Naive thymus-derived CD4-positive, alpha-beta T cell (primary cell): ENCODE measurements at regions of chr6 and their contacts with region 1.

Region 1: GRCh38 chr6:106325336-106326178 is at the start of gene ATG5:
- DNase-seq: peak; percentile 99
- ATAC-seq: peak; percentile 98
- H3K4me3 ChIP-seq: peak within 1 kb of the TSS; percentile 99
- H3K4me3 Mint-ChIP-seq: peak within 1 kb of the TSS; percentile 96 to 100 (median 98)
- H3K27ac ChIP-seq: peak within 1 kb of the TSS; percentile 95
- H3K27ac Mint-ChIP-seq: peak within 1 kb of the TSS; percentile 95 to 100 (median 98)
- H3K4me1 ChIP-seq: peaks cover 16 to 24% of the 10 kb centered on the region in 2 donors
- H3K4me1 Mint-ChIP-seq: peaks cover 33 to 56% (median 46%) of the 10 kb centered on the region in 7 donors
- H3K27me3 ChIP-seq: no peaks in the 10 kb centered on the region
- H3K27me3 Mint-ChIP-seq: peaks cover 13 to 30% (median 17%) of the 10 kb centered on the region in 5 donors
- total RNA-seq, gene ATG5: 24.0 to 30.9 (median 27.0) TPM

Region 2: DNA sequence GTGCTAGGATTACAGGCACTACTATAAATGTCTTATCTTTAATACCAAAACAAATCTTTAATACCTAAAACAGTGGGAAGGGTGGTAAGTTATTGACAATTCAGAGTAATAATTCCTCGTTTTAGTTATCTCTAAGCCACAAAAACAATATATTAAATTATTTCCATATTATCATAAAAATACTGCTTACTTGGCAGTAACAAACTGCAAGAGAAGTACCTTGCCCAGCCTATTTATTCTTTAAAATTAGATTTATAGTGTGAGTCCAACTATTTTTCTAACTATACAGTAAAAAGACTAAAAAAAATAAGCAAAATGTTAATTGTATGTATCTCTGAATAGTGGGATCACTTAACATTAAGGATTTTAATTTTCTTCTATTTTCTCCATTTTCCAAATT is 1589.0 kb before region 1 on chr6:
- CTCF ChIA-PET with region 1: no interaction called
- POLR2A ChIA-PET with region 1: no interaction called
- intact Hi-C with region 1: no loop called
- DNase-seq: no peak
- ATAC-seq: no peak
- H3K4me3 ChIP-seq: no peak overlapping the region
- H3K4me3 Mint-ChIP-seq: no peak overlapping the region
- H3K27ac ChIP-seq: no peak overlapping the region
- H3K27ac Mint-ChIP-seq: no peak overlapping the region
- H3K4me1 ChIP-seq: no peaks in the 10 kb centered on the region
- H3K4me1 Mint-ChIP-seq: no peaks in the 10 kb centered on the region
- H3K27me3 ChIP-seq: no peaks in the 10 kb centered on the region
- H3K27me3 Mint-ChIP-seq: no peaks in the 10 kb centered on the region

Region 3: GRCh38 chr6:104789770-104790190 is 1535.8 kb before region 1 on chr6:
- CTCF ChIA-PET with region 1: no interaction called
- POLR2A ChIA-PET with region 1: no interaction called
- intact Hi-C with region 1: loop called in 1 of 2 experiments (anchors 5 kb)
- DNase-seq: peak in 7 of 9 donors; percentile 43 to 78 (median 63)
- ATAC-seq: peak; percentile 96
- H3K4me3 ChIP-seq: no peak overlapping the region
- H3K4me3 Mint-ChIP-seq: peak overlapping the region in 7 of 10 donors; percentile 31 to 79 (median 49)
- H3K27ac ChIP-seq: no peak overlapping the region
- H3K27ac Mint-ChIP-seq: peak overlapping the region; percentile 21 to 86 (median 65)
- H3K4me1 ChIP-seq: peaks cover 8 to 10% of the 10 kb centered on the region in 2 donors
- H3K4me1 Mint-ChIP-seq: peaks cover 10 to 32% (median 19%) of the 10 kb centered on the region in 7 donors
- H3K27me3 ChIP-seq: no peaks in the 10 kb centered on the region
- H3K27me3 Mint-ChIP-seq: no peaks in the 10 kb centered on the region

Region 4: GRCh38 chr6:105646391-105646867 is 679.1 kb before region 1 on chr6:
- CTCF ChIA-PET with region 1: no interaction called
- POLR2A ChIA-PET with region 1: no interaction called
- intact Hi-C with region 1: loop called in 1 of 2 experiments (anchors 1 kb)
- DNase-seq: peak in 1 of 9 donors; percentile 36
- ATAC-seq: peak; percentile 81
- H3K4me3 ChIP-seq: no peak overlapping the region
- H3K4me3 Mint-ChIP-seq: peak overlapping the region in 1 of 10 donors; percentile 41
- H3K27ac ChIP-seq: no peak overlapping the region
- H3K27ac Mint-ChIP-seq: peak overlapping the region in 2 of 9 donors; percentile 12 to 83
- H3K4me1 ChIP-seq: peaks cover 0 to 79% of the 10 kb centered on the region in 2 donors
- H3K4me1 Mint-ChIP-seq: peaks cover 30 to 80% (median 44%) of the 10 kb centered on the region in 7 donors
- H3K27me3 ChIP-seq: no peaks in the 10 kb centered on the region
- H3K27me3 Mint-ChIP-seq: peaks cover 0 to 5% (median 0%) of the 10 kb centered on the region in 5 donors

Region 5: GRCh38 chr6:106339334-106340029 is 13.9 kb after region 1 on chr6:
- CTCF ChIA-PET with region 1: interaction called, 11 read pairs
- POLR2A ChIA-PET with region 1: interaction called, 15 read pairs
- intact Hi-C with region 1: no loop called
- DNase-seq: peak in 8 of 9 donors; percentile 19 to 50 (median 35)
- ATAC-seq: peak; percentile 88
- H3K4me3 ChIP-seq: no peak overlapping the region
- H3K4me3 Mint-ChIP-seq: peak overlapping the region in 7 of 10 donors; percentile 15 to 67 (median 44)
- H3K27ac ChIP-seq: no peak overlapping the region
- H3K27ac Mint-ChIP-seq: no peak overlapping the region
- H3K4me1 ChIP-seq: no peaks in the 10 kb centered on the region
- H3K4me1 Mint-ChIP-seq: peaks cover 0 to 9% (median 6%) of the 10 kb centered on the region in 7 donors
- H3K27me3 ChIP-seq: no peaks in the 10 kb centered on the region
- H3K27me3 Mint-ChIP-seq: peaks cover 14 to 44% (median 20%) of the 10 kb centered on the region in 5 donors

Region 6: DNA sequence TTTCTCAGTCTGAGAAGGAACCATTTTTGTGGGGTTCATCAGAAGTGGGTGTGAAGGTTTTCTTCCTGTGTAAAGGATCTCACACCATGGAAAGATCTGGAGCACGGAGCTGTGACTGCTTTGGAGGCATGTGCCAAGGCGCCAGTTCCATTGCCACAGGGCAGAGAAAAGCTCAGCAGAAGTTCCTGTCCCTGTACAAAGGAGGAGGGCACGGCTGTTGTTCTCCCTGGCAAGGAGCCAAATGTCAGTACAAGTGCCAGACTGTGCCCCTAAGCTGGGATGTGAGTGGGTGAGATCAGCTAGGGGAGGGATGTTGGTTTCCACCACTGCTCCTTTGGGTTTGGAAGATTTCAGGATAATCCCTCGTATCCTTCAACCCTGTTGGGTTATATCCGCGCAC is 152.2 kb after region 1 on chr6:
- CTCF ChIA-PET with region 1: no interaction called
- POLR2A ChIA-PET with region 1: no interaction called
- intact Hi-C with region 1: no loop called
- DNase-seq: peak in 3 of 9 donors; percentile 6 to 19 (median 7)
- ATAC-seq: no peak
- H3K4me3 ChIP-seq: no peak overlapping the region
- H3K4me3 Mint-ChIP-seq: no peak overlapping the region
- H3K27ac ChIP-seq: no peak overlapping the region
- H3K27ac Mint-ChIP-seq: peak overlapping the region in 1 of 9 donors; percentile 40
- H3K4me1 ChIP-seq: peaks cover 0 to 5% of the 10 kb centered on the region in 2 donors
- H3K4me1 Mint-ChIP-seq: peaks cover 0 to 16% (median 10%) of the 10 kb centered on the region in 7 donors
- H3K27me3 ChIP-seq: no peaks in the 10 kb centered on the region
- H3K27me3 Mint-ChIP-seq: peaks cover 0 to 7% (median 0%) of the 10 kb centered on the region in 5 donors

Region 7: DNA sequence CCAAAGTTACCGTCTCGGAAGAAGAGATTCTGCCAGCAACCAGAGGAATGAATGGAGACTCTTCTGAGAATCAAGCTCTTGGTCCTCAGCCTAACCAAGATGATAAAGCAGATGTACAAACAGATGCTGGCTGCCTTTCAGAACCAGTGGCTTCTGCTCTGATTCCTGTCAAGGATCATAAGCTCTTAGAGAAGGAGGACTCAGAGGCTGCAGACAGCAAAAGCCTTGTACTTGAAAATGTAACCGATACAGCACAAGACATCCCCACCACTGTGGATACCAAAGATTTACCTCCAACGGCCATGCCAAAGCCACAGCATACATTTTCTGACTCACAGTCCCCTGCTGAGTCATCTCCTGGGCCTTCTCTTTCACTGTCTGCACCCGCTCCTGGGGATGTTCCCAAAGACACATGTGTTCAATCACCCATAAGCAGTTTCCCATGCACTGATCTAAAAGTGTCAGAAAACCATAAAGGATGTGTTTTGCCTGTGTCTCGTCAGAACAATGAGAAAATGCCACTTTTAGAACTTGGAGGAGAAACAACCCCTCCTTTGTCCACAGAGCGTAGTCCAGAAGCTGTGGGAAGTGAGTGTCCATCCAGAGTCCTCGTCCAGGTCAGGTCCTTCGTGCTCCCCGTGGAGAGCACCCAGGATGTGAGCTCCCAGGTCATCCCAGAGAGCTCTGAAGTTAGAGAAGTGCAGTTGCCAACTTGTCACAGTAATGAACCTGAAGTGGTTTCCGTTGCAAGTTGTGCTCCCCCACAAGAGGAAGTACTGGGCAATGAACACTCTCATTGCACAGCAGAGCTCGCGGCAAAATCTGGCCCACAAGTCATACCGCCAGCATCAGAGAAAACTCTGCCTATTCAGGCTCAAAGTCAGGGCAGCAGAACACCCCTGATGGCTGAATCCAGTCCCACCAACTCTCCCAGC is 194.2 kb after region 1 on chr6:
- CTCF ChIA-PET with region 1: no interaction called
- POLR2A ChIA-PET with region 1: interaction called, 4 read pairs
- intact Hi-C with region 1: loop called in 1 of 2 experiments (anchors 2 kb)
- DNase-seq: peak; percentile 38 to 80 (median 72)
- ATAC-seq: peak; percentile 68
- H3K4me3 ChIP-seq: peak overlapping the region; percentile 69
- H3K4me3 Mint-ChIP-seq: peak overlapping the region; percentile 82 to 96 (median 93)
- H3K27ac ChIP-seq: peak overlapping the region; percentile 86
- H3K27ac Mint-ChIP-seq: peak overlapping the region; percentile 92 to 99 (median 95)
- H3K4me1 ChIP-seq: peaks cover 42 to 47% of the 10 kb centered on the region in 2 donors
- H3K4me1 Mint-ChIP-seq: peaks cover 36 to 87% (median 71%) of the 10 kb centered on the region in 7 donors
- H3K27me3 ChIP-seq: no peaks in the 10 kb centered on the region
- H3K27me3 Mint-ChIP-seq: no peaks in the 10 kb centered on the region

Region 8: GRCh38 chr6:107114213-107114905 is 788.8 kb after region 1 on chr6:
- CTCF ChIA-PET with region 1: no interaction called
- POLR2A ChIA-PET with region 1: no interaction called
- intact Hi-C with region 1: loop called in 1 of 2 experiments (anchors 10 kb)
- DNase-seq: peak; percentile 39 to 85 (median 67)
- ATAC-seq: peak; percentile 88
- H3K4me3 ChIP-seq: peak overlapping the region; percentile 32
- H3K4me3 Mint-ChIP-seq: peak overlapping the region; percentile 71 to 88 (median 85)
- H3K27ac ChIP-seq: no peak overlapping the region
- H3K27ac Mint-ChIP-seq: peak overlapping the region in 5 of 9 donors; percentile 49 to 77 (median 63)
- H3K4me1 ChIP-seq: peaks cover 14% of the 10 kb centered on the region in 2 donors
- H3K4me1 Mint-ChIP-seq: peaks cover 8 to 21% (median 18%) of the 10 kb centered on the region in 7 donors
- H3K27me3 ChIP-seq: no peaks in the 10 kb centered on the region
- H3K27me3 Mint-ChIP-seq: peaks cover 0 to 22% (median 7%) of the 10 kb centered on the region in 5 donors

Region 9: GRCh38 chr6:108260809-108261569 is 1935.4 kb after region 1 on chr6 and contains the start of gene SNX3:
- CTCF ChIA-PET with region 1: no interaction called
- POLR2A ChIA-PET with region 1: no interaction called
- intact Hi-C with region 1: loop called in 1 of 2 experiments (anchors 10 kb)
- DNase-seq: peak; percentile 81 to 92 (median 91)
- ATAC-seq: peak; percentile 92
- H3K4me3 ChIP-seq: peak within 1 kb of the TSS; percentile 76
- H3K4me3 Mint-ChIP-seq: peak within 1 kb of the TSS; percentile 78 to 97 (median 91)
- H3K27ac ChIP-seq: peak within 1 kb of the TSS; percentile 96
- H3K27ac Mint-ChIP-seq: peak within 1 kb of the TSS; percentile 85 to 98 (median 96)
- H3K4me1 ChIP-seq: peaks cover 0 to 8% of the 10 kb centered on the region in 2 donors
- H3K4me1 Mint-ChIP-seq: peaks cover 16 to 40% (median 26%) of the 10 kb centered on the region in 7 donors
- H3K27me3 ChIP-seq: no peaks in the 10 kb centered on the region
- H3K27me3 Mint-ChIP-seq: peaks cover 0 to 14% (median 0%) of the 10 kb centered on the region in 5 donors
- total RNA-seq, gene SNX3: 42.5 to 87.4 (median 65.8) TPM